ENCODE measurements at regions of chr12 and their contacts with region 1.

Region 1: GRCh38 chr12:12813120-12814101 is at the start of gene DDX47:
- DNase-seq: peak; percentile 76 to 100
- H3K4me3 ChIP-seq: peak within 1 kb of the TSS; percentile 78 to 99 (median 93)
- H3K27ac ChIP-seq: peak within 1 kb of the TSS; percentile 81
- H3K4me1 ChIP-seq: no peaks in the 10 kb centered on the region; a peak in 1 of 7 replicates
- H3K27me3 ChIP-seq: no peaks in the 10 kb centered on the region
- CTCF ChIP-seq: peak; percentile 86 to 96 (median 91)
- EP300 ChIP-seq: no peak
- POLR2A ChIP-seq: peak; percentile 65 to 85
- RAD21 ChIP-seq: peak; percentile 15 to 32; a peak in 1 of 4 replicates
- total RNA-seq, gene DDX47: 74.2 and 84.4 TPM in 2 replicates

Region 2: GRCh38 chr12:12654691-12655460 is 158.5 kb before region 1 on chr12:
- CTCF ChIA-PET with region 1: no interaction called
- POLR2A ChIA-PET with region 1: no interaction called
- DNase-seq: no peak
- H3K4me3 ChIP-seq: no peak overlapping the region
- H3K27ac ChIP-seq: no peak overlapping the region
- H3K4me1 ChIP-seq: peaks cover 2 to 9% (median 5%) of the 10 kb centered on the region in 4 experiments
- H3K27me3 ChIP-seq: no peaks in the 10 kb centered on the region
- CTCF ChIP-seq: no peak
- EP300 ChIP-seq: no peak
- POLR2A ChIP-seq: no peak
- RAD21 ChIP-seq: no peak

Region 3: GRCh38 chr12:12786716-12787601 is 26.5 kb before region 1 on chr12:
- CTCF ChIA-PET with region 1: interaction called, 55 read pairs
- POLR2A ChIA-PET with region 1: interaction called, 4 read pairs
- DNase-seq: peak; percentile 57 to 73
- H3K4me3 ChIP-seq: peak overlapping the region in 2 of 4 experiments; percentile 37 to 50; a peak in 6 of 8 replicates
- H3K27ac ChIP-seq: no peak overlapping the region
- H3K4me1 ChIP-seq: peaks cover 5 to 13% (median 11%) of the 10 kb centered on the region in 4 experiments
- H3K27me3 ChIP-seq: peaks cover 12 to 29% (median 18%) of the 10 kb centered on the region in 4 experiments
- CTCF ChIP-seq: no peak
- EP300 ChIP-seq: no peak
- POLR2A ChIP-seq: peak in 1 of 2 experiments; percentile 43; a peak in 1 of 3 replicates
- RAD21 ChIP-seq: no peak

Region 4: GRCh38 chr12:12803186-12803585 is 10.2 kb before region 1 on chr12:
- CTCF ChIA-PET with region 1: interaction called, 21 read pairs
- POLR2A ChIA-PET with region 1: no interaction called
- DNase-seq: no peak
- H3K4me3 ChIP-seq: no peak overlapping the region
- H3K27ac ChIP-seq: no peak overlapping the region
- H3K4me1 ChIP-seq: no peaks in the 10 kb centered on the region
- H3K27me3 ChIP-seq: no peaks in the 10 kb centered on the region
- CTCF ChIP-seq: no peak
- EP300 ChIP-seq: no peak
- POLR2A ChIP-seq: no peak
- RAD21 ChIP-seq: no peak

Region 5: GRCh38 chr12:12899530-12900380 is 86.3 kb after region 1 on chr12:
- CTCF ChIA-PET with region 1: no interaction called
- POLR2A ChIA-PET with region 1: no interaction called
- DNase-seq: no peak
- H3K4me3 ChIP-seq: no peak overlapping the region
- H3K27ac ChIP-seq: no peak overlapping the region
- H3K4me1 ChIP-seq: no peaks in the 10 kb centered on the region
- H3K27me3 ChIP-seq: no peaks in the 10 kb centered on the region; a peak in 1 of 7 replicates
- CTCF ChIP-seq: no peak
- EP300 ChIP-seq: no peak
- POLR2A ChIP-seq: no peak
- RAD21 ChIP-seq: no peak